ENCODE measurements at regions of chr1 and their contacts with region 1.

Region 1: GRCh38 chr1:112706908-112707663 is at the start of gene RHOC:
- DNase-seq: peak; percentile 80
- H3K4me3 Mint-ChIP-seq: peak within 1 kb of the TSS; percentile 69
- H3K27ac Mint-ChIP-seq: no peak within 1 kb of the TSS
- H3K4me1 Mint-ChIP-seq: peaks cover 36% of the 10 kb centered on the region
- H3K27me3 Mint-ChIP-seq: peaks cover 2% of the 10 kb centered on the region
- total RNA-seq, gene RHOC: 36.3 to 37.3 TPM

Region 2: DNA sequence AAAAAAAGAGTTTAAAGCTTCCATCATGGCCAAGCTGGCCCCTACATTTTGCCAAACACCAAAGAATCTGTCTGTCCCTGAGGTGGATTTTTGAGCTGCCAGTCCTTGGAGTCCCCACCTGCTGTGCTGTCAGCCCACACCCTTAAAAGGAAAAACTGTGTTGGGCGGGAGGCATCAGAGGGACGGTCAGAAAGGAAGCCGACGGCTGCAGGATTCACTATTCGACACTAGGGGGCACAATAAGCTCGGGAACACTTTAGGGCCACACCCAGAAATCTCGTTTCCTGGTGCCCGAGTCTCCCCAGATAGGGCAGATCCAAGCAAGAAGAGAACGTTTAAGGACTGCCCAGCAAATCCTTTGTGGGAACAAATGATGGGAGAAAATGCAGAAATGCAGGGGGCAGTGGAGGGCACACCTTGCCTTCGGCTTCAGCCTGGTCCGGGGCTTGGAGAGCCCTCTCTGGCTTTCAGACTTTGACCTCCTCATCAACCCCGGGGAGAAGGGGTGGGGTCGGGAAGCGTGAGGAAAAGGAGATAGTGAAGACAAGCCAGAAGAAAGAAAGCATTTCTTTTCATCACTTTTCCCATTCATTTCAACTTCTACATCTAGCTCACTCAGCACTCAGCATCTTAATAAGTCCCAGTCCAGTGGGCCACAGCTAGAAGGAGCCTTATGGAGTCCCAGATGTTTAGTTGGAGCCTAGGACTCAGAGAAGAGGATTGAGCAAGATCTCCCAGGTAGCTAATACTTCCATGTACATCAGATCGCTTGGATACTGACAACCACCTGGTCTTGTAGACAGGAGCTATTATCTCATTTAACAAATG is 316.1 kb before region 1 on chr1:
- CTCF ChIA-PET with region 1: interaction called, 23 read pairs
- intact Hi-C with region 1: loop called (anchors 1 kb)
- DNase-seq: peak; percentile 90
- H3K4me3 Mint-ChIP-seq: peak overlapping the region; percentile 45
- H3K27ac Mint-ChIP-seq: no peak overlapping the region
- H3K4me1 Mint-ChIP-seq: peaks cover 18% of the 10 kb centered on the region
- H3K27me3 Mint-ChIP-seq: peaks cover 14% of the 10 kb centered on the region

Region 3: GRCh38 chr1:112395821-112396652 is 311.0 kb before region 1 on chr1 and contains the start of gene CTTNBP2NL:
- CTCF ChIA-PET with region 1: interaction called, 23 read pairs
- intact Hi-C with region 1: loop called (anchors 1 kb)
- DNase-seq: peak; percentile 84
- H3K4me3 Mint-ChIP-seq: peak within 1 kb of the TSS; percentile 90
- H3K27ac Mint-ChIP-seq: no peak within 1 kb of the TSS
- H3K4me1 Mint-ChIP-seq: peaks cover 23% of the 10 kb centered on the region
- H3K27me3 Mint-ChIP-seq: peaks cover 9% of the 10 kb centered on the region
- total RNA-seq, gene CTTNBP2NL: 1.0 to 1.4 TPM

Region 4: DNA sequence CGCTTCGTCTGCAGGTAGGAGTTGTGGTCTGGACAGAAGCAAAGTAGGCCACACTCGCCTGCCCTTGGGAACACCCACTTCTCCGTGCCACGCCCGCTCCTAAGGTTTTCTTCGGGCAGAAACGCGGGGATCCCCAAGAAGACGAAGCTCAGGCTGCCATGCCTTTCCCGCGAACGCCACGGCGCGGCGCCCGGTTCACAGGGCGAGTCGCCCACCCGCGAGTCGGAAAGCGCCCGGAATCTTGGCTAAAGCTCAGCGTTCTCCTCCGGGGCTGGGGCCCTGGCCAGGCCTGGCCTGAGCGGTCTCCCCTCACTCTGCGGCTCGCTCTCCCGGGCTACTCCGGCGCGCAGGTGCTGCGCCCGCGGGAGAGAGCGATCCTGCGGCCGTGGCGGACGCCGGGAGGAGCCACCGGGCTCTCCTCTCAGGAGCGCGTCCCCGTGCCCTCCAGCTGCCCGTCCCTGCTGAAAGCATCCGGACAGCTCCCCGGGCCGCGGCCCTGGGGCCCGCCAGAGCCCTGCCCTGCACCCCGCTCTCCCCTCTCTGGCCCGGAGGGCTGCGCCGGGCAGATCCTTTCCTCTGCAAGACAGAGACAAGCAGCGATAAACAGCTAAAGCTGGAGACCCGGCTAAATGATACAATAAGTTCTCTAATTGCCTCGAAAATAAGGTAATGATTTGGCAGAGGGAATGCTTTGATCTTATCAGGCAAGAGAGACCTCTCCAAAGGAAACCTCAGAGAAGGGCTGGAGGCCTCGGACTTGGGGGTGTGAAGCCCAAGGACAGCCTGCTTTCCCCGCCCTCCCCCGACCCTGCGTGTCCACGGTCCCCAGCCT is 205.1 kb before region 1 on chr1:
- CTCF ChIA-PET with region 1: interaction called, 36 read pairs
- intact Hi-C with region 1: loop called (anchors 1 kb)
- DNase-seq: peak; percentile 73
- H3K4me3 Mint-ChIP-seq: peak overlapping the region; percentile 60
- H3K27ac Mint-ChIP-seq: no peak overlapping the region
- H3K4me1 Mint-ChIP-seq: peaks cover 3% of the 10 kb centered on the region
- H3K27me3 Mint-ChIP-seq: peaks cover 58% of the 10 kb centered on the region

Region 5: GRCh38 chr1:112508278-112509004 is 198.6 kb before region 1 on chr1 and contains the start of gene WNT2B:
- CTCF ChIA-PET with region 1: interaction called, 5 read pairs
- intact Hi-C with region 1: loop called (anchors 2 kb)
- DNase-seq: peak; percentile 77
- H3K4me3 Mint-ChIP-seq: peak within 1 kb of the TSS; percentile 73
- H3K27ac Mint-ChIP-seq: no peak within 1 kb of the TSS
- H3K4me1 Mint-ChIP-seq: no peaks in the 10 kb centered on the region
- H3K27me3 Mint-ChIP-seq: peaks cover 25% of the 10 kb centered on the region
- total RNA-seq, gene WNT2B: 0.12 TPM in 1 of 2 experiments, not detected in the other

Region 6: DNA sequence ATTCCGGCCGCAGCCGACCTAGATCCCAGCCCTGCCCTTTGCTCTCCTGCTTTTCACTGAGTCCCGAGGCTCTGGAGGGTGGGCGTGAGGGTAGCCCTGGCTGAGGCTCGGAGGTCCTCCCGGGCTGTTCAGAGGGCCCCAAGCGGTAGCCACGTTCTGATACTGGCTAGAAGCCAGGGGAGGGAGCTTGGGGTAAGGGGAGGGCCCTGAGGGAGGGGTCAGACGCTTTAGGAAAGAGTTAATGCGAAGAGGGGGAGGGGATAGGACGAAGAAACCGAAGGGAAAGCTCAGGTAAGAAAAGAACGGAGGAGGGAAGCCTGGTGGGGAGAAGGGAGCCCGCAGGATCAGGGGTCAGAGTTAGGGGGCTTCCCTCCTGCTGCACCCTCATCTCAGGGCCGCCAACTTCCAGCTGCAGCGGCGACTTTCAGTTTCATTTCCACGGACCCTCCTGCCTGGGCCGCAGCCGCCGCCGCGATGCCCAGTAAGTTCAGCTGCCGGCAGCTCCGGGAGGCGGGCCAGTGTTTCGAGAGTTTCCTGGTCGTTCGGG is 32.6 kb before region 1 on chr1 and contains the start of gene MOV10:
- CTCF ChIA-PET with region 1: interaction called, 9 read pairs
- intact Hi-C with region 1: loop called (anchors 1 kb)
- DNase-seq: peak; percentile 60
- H3K4me3 Mint-ChIP-seq: peak within 1 kb of the TSS; percentile 92
- H3K27ac Mint-ChIP-seq: peak within 1 kb of the TSS; percentile 84
- H3K4me1 Mint-ChIP-seq: peaks cover 38% of the 10 kb centered on the region
- H3K27me3 Mint-ChIP-seq: no peaks in the 10 kb centered on the region
- total RNA-seq, gene MOV10: 46.0 to 48.8 TPM

Region 7: GRCh38 chr1:112727716-112728115 is 20.6 kb after region 1 on chr1:
- CTCF ChIA-PET with region 1: no interaction called
- intact Hi-C with region 1: no loop called
- DNase-seq: no peak
- H3K4me3 Mint-ChIP-seq: no peak overlapping the region
- H3K27ac Mint-ChIP-seq: no peak overlapping the region
- H3K4me1 Mint-ChIP-seq: peaks cover 8% of the 10 kb centered on the region
- H3K27me3 Mint-ChIP-seq: no peaks in the 10 kb centered on the region

Region 8: DNA sequence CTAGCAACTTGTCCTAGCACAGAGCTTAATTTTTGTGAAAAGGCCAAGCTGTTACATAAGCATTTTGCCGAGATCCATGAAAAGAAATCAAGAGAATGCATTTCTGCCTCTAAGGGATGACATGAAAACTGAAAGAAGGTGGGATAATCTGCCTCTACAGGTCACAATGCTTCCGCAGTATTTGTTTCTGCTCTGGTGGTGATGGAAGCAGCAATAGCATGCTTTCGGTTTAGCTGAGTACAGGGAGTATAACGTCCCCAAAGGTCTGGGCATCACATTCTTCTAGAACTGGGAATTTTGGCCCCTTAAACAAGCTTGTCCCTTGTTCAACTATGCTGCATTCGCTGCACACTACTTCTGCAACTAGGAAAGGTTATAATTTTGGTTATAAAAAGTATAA is 668.8 kb after region 1 on chr1:
- CTCF ChIA-PET with region 1: no interaction called
- intact Hi-C with region 1: no loop called
- DNase-seq: no peak
- H3K4me3 Mint-ChIP-seq: no peak overlapping the region
- H3K27ac Mint-ChIP-seq: no peak overlapping the region
- H3K4me1 Mint-ChIP-seq: no peaks in the 10 kb centered on the region
- H3K27me3 Mint-ChIP-seq: peaks cover 4% of the 10 kb centered on the region

Region 9: DNA sequence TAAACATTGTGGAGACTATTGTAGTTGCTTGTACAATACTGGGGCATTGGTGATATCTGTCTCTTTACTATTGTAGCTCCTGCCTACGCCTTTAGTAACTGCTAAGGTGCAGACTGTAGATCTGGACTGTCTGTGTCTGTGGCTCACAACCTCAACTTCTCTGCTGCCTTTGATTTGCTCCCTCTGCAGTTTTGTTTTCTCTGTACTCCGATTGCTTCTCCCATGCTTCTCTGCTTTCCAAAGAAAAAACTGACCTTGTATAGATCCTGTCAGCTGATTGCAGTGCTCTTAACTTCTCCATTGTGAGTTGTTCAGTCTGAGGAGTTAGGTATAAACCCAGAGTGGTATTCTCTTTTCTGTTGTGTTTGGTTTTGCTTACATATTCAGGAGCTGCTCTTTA is 698.5 kb after region 1 on chr1:
- CTCF ChIA-PET with region 1: no interaction called
- intact Hi-C with region 1: no loop called
- DNase-seq: no peak
- H3K4me3 Mint-ChIP-seq: no peak overlapping the region
- H3K27ac Mint-ChIP-seq: no peak overlapping the region
- H3K4me1 Mint-ChIP-seq: peaks cover 4% of the 10 kb centered on the region
- H3K27me3 Mint-ChIP-seq: no peaks in the 10 kb centered on the region

Measured in activated naive CD4-positive, alpha-beta T cell treated with anti-CD3 and anti-CD28 coated beads for 36 hours (primary cell).